OCI-LY7 (cell line): ENCODE measurements at regions of chr3 and their contacts with region 1.

Region 1: GRCh38 chr3:116757315-116757714 is 47.7 kb downstream of the TUSC7 start:
- DNase-seq: no peak
- H3K4me3 ChIP-seq: no peak overlapping the region
- H3K27ac ChIP-seq: no peak overlapping the region
- H3K4me1 ChIP-seq: no peaks in the 10 kb centered on the region
- CTCF ChIP-seq: no peak

Region 2: DNA sequence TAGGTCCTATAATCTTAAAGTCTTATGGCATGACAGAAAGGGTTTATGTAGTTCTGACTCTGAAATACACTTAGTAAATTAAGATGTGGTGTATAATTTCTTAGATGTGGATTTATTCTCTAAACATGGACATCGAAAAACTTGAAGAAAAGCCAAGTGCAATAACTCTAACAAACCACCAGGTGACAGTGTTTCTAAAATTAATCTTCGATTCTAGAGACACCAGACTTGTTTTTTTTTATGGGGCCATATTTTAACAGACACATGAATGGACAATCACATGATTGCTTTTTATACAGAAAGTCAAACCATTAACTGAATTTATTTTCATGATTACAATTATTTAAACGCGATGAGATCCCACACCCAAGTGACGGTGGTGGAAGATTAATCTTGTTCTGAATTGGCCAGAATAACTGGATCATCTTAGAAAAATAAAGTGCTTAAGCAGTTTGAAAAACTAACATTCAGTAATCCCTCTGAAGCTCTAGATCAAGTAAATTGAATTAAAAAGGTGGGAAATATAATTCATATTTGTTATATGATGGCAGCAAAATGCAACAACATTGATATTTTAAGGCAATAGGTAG is 617.1 kb before region 1 on chr3:
- CTCF ChIA-PET with region 1: no interaction called
- POLR2A ChIA-PET with region 1: no interaction called
- intact Hi-C with region 1: loop called (anchors 1 kb)
- DNase-seq: peak; percentile 43
- H3K4me3 ChIP-seq: no peak overlapping the region
- H3K27ac ChIP-seq: no peak overlapping the region
- H3K4me1 ChIP-seq: no peaks in the 10 kb centered on the region
- CTCF ChIP-seq: peak; percentile 93

Region 3: GRCh38 chr3:116741467-116741866 is 15.8 kb before region 1 on chr3:
- CTCF ChIA-PET with region 1: no interaction called
- POLR2A ChIA-PET with region 1: no interaction called
- intact Hi-C with region 1: no loop called
- DNase-seq: no peak
- H3K4me3 ChIP-seq: no peak overlapping the region
- H3K27ac ChIP-seq: no peak overlapping the region
- H3K4me1 ChIP-seq: no peaks in the 10 kb centered on the region
- CTCF ChIP-seq: no peak